OCI-LY7 (cell line): ENCODE measurements at regions of chr3 and their contacts with region 1.

Region 1: DNA sequence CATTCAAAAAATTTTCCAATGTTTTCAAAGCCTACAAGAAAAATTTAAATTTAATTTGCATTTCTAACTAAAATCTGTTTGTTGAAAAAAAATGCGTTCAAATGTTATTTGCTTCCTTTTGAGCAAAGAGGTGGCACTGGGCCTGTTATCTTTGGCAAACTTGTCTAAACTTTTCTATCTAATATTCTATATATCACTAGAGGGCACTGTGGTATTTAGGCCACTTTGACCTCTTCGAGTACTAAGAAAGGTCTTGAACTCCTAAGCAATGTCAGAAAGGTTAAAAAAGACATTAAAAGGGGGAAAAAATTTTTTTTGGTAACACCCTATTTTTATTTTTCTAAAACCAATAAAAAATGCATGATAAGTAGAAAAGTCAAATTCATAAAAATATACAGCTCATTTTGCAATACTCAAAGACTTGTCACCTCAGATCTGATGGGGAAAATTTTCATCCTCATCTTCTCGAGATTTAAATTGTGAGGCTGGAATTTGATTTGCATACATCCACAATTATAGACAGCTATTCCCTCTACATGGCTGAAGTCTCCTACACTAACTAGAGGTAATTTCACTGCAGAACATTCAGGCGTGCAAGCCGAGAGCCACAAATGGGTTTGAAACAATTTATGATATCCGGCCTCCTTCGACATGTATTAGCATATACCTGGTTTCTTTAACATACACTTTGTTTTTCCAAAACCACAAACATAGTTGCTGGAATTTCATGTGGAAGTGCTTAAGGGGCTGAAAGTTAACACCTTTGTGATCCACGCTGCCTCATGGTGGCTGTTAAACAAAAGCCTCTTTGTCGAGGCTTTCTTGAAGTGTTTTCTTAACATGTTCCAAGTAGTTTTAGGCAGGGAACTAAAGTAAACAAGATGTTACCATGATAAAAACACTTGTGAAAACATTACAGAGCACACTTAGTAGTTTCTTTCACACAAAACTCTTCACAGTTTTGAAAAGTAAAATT is 576.4 kb downstream of the FOXP1 start:
- DNase-seq: peak; percentile 74
- H3K4me3 ChIP-seq: no peak overlapping the region
- H3K27ac ChIP-seq: no peak overlapping the region
- H3K4me1 ChIP-seq: peaks cover 64% of the 10 kb centered on the region
- CTCF ChIP-seq: peak; percentile 95

Region 2: GRCh38 chr3:71064288-71064955 is 57.3 kb after region 1 on chr3:
- CTCF ChIA-PET with region 1: interaction called, 4 read pairs
- POLR2A ChIA-PET with region 1: interaction called, 7 read pairs
- intact Hi-C with region 1: loop called (anchors 2 kb)
- DNase-seq: peak; percentile 57
- H3K4me3 ChIP-seq: peak overlapping the region; percentile 70
- H3K27ac ChIP-seq: peak overlapping the region; percentile 48
- H3K4me1 ChIP-seq: peaks cover 63% of the 10 kb centered on the region
- CTCF ChIP-seq: no peak

Region 3: DNA sequence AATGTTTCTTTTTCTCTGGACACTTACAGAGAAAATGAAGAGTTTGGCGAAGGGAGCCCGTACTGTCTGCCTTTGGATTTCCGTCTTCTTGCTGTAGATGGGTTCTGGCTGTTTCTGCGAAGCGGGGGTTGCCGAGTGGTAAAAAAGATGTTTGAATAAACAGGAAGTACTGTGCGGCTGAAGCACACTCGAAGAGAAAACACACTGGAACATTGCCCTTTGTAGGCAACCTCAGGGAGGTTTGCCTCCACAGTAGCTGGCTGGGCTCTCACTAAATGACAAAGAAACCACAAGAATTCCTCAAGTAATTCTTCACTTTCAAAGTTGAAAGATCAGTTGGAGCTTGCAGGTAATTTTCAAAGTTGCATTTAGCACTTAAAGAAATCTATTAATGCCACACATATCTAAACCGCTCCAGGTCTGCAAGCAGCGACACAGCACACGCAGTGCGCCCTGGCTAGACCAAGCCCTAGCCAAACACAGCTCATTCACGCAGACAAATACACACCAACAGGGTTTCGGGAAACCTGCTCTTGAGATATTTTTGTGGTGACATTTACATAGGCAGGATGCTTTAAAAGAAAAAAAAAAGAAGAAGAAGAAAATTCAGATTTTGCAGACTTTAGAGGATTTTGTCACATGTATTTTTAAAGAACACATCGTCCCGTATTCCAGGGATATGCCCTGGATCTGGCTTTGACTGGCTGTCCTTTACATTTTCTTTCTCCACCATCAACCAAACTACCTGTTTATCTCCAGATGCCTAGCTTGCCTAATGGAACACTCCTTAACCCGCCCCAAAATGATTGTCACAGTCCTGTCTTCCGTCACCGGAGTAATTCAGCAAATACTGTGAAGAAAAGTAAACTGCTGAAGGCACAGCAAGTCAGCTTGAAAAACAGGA is 123.6 kb after region 1 on chr3:
- CTCF ChIA-PET with region 1: no interaction called
- POLR2A ChIA-PET with region 1: interaction called, 6 read pairs
- intact Hi-C with region 1: loop called (anchors 5 kb)
- DNase-seq: peak; percentile 84
- H3K4me3 ChIP-seq: peak overlapping the region; percentile 85
- H3K27ac ChIP-seq: peak overlapping the region; percentile 96
- H3K4me1 ChIP-seq: peaks cover 72% of the 10 kb centered on the region
- CTCF ChIP-seq: no peak

Region 4: GRCh38 chr3:71360764-71361163 is 353.7 kb after region 1 on chr3:
- CTCF ChIA-PET with region 1: no interaction called
- POLR2A ChIA-PET with region 1: no interaction called
- intact Hi-C with region 1: no loop called
- DNase-seq: peak; percentile 43
- H3K4me3 ChIP-seq: no peak overlapping the region
- H3K27ac ChIP-seq: peak overlapping the region; percentile 11
- H3K4me1 ChIP-seq: peaks cover 32% of the 10 kb centered on the region
- CTCF ChIP-seq: no peak

Region 5: DNA sequence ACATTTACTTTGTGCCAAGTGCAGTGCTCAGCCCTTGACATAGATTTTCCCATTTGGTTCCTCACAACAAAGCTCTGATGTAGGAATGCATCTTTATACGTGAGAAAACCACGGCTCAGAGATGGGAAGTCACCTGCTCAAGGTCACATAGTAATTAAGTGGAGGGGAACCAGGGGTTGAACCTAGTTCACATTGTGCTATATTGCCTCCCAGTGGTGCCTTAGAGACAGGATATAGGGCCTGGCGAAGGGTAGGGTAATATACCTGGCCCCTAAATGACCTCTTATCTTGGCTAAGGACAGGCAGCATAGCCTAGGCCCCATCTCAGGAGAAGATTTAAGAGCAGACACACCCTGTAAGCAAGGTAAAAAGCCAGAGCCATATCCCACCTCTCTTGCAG is 504.9 kb after region 1 on chr3:
- CTCF ChIA-PET with region 1: no interaction called
- POLR2A ChIA-PET with region 1: interaction called, 3 read pairs
- intact Hi-C with region 1: loop called (anchors 5 kb)
- DNase-seq: peak; percentile 77
- H3K4me3 ChIP-seq: no peak overlapping the region
- H3K27ac ChIP-seq: peak overlapping the region; percentile 14
- H3K4me1 ChIP-seq: peaks cover 38% of the 10 kb centered on the region
- CTCF ChIP-seq: peak; percentile 83